Psoas muscle (tissue), 8 donors: ENCODE measurements at regions of chr7 and their contacts with region 1.

Region 1: DNA sequence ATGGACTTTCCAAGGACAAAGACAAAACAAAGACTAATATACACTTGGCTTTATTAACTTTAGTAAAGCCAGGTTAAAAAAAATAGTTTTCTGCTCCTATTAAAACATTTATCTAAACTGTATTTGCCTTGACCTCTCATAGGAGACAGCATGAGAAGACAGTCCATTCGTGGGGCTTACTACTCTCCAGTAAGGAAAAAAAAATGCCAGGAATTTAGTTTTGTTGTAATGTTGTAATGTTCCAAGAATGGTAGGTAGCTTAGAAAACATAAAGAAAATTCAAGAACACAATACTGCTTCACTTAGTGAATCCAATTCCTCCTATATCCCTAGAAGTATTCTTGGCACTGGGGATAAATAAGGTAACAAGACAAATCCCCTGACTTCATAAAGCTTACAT is 81.7 kb downstream of the KMT2C start:
- DNase-seq: no peak
- ATAC-seq: no peak
- H3K4me3 ChIP-seq: no peak overlapping the region
- H3K27ac ChIP-seq: no peak overlapping the region
- H3K4me1 ChIP-seq: no peaks in the 10 kb centered on the region
- H3K27me3 ChIP-seq: no peaks in the 10 kb centered on the region
- CTCF ChIP-seq: no peak

Region 2: GRCh38 chr7:152328234-152328633 is 25.8 kb before region 1 on chr7:
- intact Hi-C with region 1: loop called in 1 of 2 experiments (anchors 2 kb)
- DNase-seq: no peak
- ATAC-seq: no peak
- H3K4me3 ChIP-seq: no peak overlapping the region
- H3K27ac ChIP-seq: no peak overlapping the region
- H3K4me1 ChIP-seq: peaks cover 19% of the 10 kb centered on the region
- H3K27me3 ChIP-seq: no peaks in the 10 kb centered on the region
- CTCF ChIP-seq: no peak

Region 3: GRCh38 chr7:152399344-152399743 is 45.3 kb after region 1 on chr7:
- intact Hi-C with region 1: loop called in 1 of 2 experiments (anchors 2 kb)
- DNase-seq: no peak
- ATAC-seq: no peak
- H3K4me3 ChIP-seq: no peak overlapping the region
- H3K27ac ChIP-seq: no peak overlapping the region
- H3K4me1 ChIP-seq: peaks cover 24% of the 10 kb centered on the region
- H3K27me3 ChIP-seq: no peaks in the 10 kb centered on the region
- CTCF ChIP-seq: no peak

Region 4: GRCh38 chr7:152424348-152425108 is 70.5 kb after region 1 on chr7:
- intact Hi-C with region 1: no loop called
- DNase-seq: no peak
- ATAC-seq: peak; percentile 82 to 92 (median 86)
- H3K4me3 ChIP-seq: peak overlapping the region; percentile 31
- H3K27ac ChIP-seq: peak overlapping the region; percentile 62
- H3K4me1 ChIP-seq: peaks cover 54% of the 10 kb centered on the region
- H3K27me3 ChIP-seq: no peaks in the 10 kb centered on the region
- CTCF ChIP-seq: no peak